CD8-positive, alpha-beta memory T cell (primary cell): ENCODE measurements at regions of chr2 and their contacts with region 1.

Region 1: DNA sequence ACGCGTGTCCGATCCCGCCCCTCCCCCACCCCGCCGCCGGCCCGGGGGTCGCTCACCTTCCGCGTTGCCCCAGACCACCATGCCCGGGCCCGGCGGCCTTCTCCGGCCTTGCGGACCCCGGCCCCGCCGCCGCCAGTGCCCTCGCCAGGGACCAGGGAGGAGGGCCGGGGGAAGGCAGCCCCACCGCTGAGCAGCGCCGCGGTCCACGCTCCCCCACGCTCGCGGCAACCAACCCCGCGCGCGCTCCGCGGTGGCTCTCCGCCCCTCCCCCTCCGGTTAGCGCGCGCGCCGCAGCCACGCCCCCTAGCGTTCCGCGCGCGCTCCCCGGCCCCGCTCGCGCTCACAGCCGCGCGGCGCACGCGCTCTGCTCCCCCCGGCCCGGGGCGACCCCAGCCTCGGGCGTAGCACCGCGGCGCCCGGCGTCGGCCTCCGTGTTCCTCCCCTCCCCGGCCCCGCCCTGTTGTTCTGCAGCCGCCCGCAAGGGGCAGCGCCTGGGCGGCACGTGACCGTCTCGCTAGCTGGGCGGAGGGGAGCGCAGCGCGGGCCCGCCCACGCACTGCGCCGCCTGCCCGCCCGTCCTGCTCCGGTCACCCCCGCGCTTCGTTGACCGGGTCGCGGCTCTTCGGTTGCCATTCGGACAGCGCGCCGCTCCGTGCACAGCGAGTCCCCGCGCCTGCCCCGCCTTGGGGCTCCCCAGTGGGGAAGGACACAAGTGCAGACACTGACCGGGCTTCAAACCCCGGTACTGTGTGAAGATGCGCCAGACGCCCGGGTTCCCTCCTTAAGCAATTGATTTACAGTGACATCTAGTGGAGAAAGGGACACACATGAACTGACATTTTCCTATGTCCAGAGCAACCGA is at the start of gene REV1:
- DNase-seq: peak; percentile 89 to 98 (median 95)
- H3K4me3 ChIP-seq: peak within 1 kb of the TSS; percentile 89
- H3K4me3 Mint-ChIP-seq: peak within 1 kb of the TSS; percentile 93 to 99 (median 97)
- H3K27ac ChIP-seq: peak within 1 kb of the TSS; percentile 78
- H3K27ac Mint-ChIP-seq: peak within 1 kb of the TSS; percentile 96 to 100 (median 98)
- H3K4me1 ChIP-seq: peaks cover 34% of the 10 kb centered on the region
- H3K4me1 Mint-ChIP-seq: peaks cover 39 to 47% (median 42%) of the 10 kb centered on the region in 3 donors
- H3K27me3 ChIP-seq: no peaks in the 10 kb centered on the region
- H3K27me3 Mint-ChIP-seq: peaks cover 0 to 5% of the 10 kb centered on the region in 2 donors
- total RNA-seq, gene REV1: 30.0 to 30.8 TPM

Region 2: GRCh38 chr2:99337113-99338028 is 152.6 kb before region 1 on chr2 and contains the start of gene EIF5B:
- CTCF ChIA-PET with region 1: interaction called, 6 read pairs
- POLR2A ChIA-PET with region 1: interaction called, 10 read pairs
- DNase-seq: peak; percentile 83 to 93 (median 87)
- H3K4me3 ChIP-seq: peak within 1 kb of the TSS; percentile 79
- H3K4me3 Mint-ChIP-seq: no peak within 1 kb of the TSS
- H3K27ac ChIP-seq: peak within 1 kb of the TSS; percentile 83
- H3K27ac Mint-ChIP-seq: no peak within 1 kb of the TSS
- H3K4me1 ChIP-seq: peaks cover 37% of the 10 kb centered on the region
- H3K4me1 Mint-ChIP-seq: peaks cover 27 to 49% (median 36%) of the 10 kb centered on the region in 3 donors
- H3K27me3 ChIP-seq: no peaks in the 10 kb centered on the region
- H3K27me3 Mint-ChIP-seq: no peaks in the 10 kb centered on the region
- total RNA-seq, gene EIF5B: 82.8 to 96.2 TPM